ENCODE measurements at regions of chr20 and their contacts with region 1.

Region 1: GRCh38 chr20:17845701-17846475 is 122.7 kb downstream of the SNX5 start:
- DNase-seq: no peak
- H3K4me3 ChIP-seq: no peak overlapping the region
- H3K27ac ChIP-seq: no peak overlapping the region
- H3K4me1 ChIP-seq: peaks cover 62% of the 10 kb centered on the region
- CTCF ChIP-seq: no peak

Region 2: DNA sequence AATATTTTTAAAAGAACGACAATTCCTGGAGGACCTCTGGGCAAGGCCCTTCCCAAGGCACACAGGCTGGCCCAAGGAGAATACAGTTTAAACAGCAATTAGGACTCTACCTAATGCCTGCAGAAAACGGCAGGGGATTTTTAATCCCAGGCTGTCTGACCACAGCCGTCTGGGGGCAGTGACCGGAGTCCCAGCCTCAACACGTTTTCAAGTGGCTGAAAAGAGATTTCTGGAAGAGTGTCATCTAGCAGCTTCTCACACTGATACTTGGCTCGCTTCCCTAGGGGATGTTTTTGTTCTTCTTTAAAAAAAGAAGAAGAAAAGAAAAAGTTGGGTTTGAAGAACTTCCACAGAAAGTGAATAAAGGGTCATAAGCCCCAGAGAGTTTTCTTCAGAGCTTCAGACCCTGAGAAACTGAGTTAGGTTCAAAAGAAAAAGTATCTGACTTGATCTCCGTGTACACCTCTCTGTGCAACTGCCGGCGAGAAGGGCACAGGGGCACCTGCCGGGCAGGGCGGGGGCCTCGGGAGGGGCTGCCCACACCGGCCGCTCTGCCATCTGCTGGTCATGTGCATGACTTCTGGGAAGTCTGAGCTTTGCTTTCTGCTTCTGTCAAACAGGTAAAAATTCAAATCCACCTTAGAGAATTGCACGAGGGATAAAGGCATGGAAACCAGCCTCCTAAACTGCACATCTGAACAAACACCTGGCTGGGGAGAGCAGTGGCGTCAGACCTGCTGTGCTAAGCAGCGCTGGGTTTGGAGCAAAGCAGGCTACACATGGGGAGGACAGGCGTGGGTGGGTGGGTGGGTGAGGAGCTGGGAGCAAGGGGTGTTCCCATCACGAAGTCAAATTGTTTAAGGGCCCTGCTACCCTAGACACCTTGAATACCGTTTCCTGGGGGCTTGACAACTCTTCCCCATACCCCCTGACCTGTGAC is 196.8 kb before region 1 on chr20:
- CTCF ChIA-PET with region 1: no interaction called
- POLR2A ChIA-PET with region 1: no interaction called
- intact Hi-C with region 1: loop called (anchors 1 kb)
- DNase-seq: peak; percentile 67
- H3K4me3 ChIP-seq: peak overlapping the region; percentile 12
- H3K27ac ChIP-seq: peak overlapping the region; percentile 76
- H3K4me1 ChIP-seq: peaks cover 65% of the 10 kb centered on the region
- CTCF ChIP-seq: peak; percentile 79

Region 3: GRCh38 chr20:17759241-17759848 is 86.5 kb before region 1 on chr20:
- CTCF ChIA-PET with region 1: no interaction called
- POLR2A ChIA-PET with region 1: no interaction called
- intact Hi-C with region 1: no loop called
- DNase-seq: no peak
- H3K4me3 ChIP-seq: no peak overlapping the region
- H3K27ac ChIP-seq: no peak overlapping the region
- H3K4me1 ChIP-seq: no peaks in the 10 kb centered on the region
- CTCF ChIP-seq: no peak

Region 4: GRCh38 chr20:17856024-17856564 is 10.2 kb after region 1 on chr20:
- CTCF ChIA-PET with region 1: interaction called, 3 read pairs
- POLR2A ChIA-PET with region 1: interaction called, 21 read pairs
- intact Hi-C with region 1: loop called (anchors 1 kb)
- DNase-seq: peak; percentile 93
- H3K4me3 ChIP-seq: no peak overlapping the region
- H3K27ac ChIP-seq: peak overlapping the region; percentile 66
- H3K4me1 ChIP-seq: peaks cover 56% of the 10 kb centered on the region
- CTCF ChIP-seq: no peak

Region 5: GRCh38 chr20:17867131-17867925 is 21.4 kb after region 1 on chr20:
- CTCF ChIA-PET with region 1: no interaction called
- POLR2A ChIA-PET with region 1: no interaction called
- intact Hi-C with region 1: no loop called
- DNase-seq: no peak
- H3K4me3 ChIP-seq: no peak overlapping the region
- H3K27ac ChIP-seq: no peak overlapping the region
- H3K4me1 ChIP-seq: peaks cover 9% of the 10 kb centered on the region
- CTCF ChIP-seq: no peak

Region 6: DNA sequence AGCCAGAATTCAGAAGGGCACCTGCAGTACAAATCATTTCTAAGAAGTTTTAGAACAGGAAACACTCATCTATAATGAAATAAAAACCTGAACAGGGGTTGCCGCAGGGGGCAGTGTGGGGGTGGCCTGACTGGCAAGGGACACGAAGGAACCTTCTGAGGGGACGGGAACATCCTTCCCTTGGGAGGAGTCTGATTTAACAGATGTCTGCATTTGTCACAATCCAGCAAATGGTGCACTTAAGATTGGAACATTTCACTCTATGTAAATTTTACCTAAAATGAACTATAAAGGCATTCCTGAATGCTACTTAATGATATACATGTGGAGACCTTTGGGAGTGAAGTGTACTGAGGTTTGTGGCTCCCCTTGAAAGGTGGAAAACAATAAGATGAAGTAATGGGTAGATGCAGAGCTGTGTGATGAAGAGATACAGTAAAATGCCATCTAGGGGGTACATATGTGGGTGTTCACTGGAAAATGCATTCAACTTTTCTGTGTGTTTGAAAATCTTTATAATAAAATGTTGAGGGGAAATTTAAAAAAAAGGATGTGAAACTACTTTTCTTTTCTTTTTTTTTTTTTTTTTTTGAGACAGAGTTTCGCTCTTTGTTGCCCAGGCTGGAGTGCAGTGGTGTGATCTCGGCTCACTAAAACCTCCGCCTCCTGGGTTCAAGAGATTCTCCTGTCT is 33.2 kb after region 1 on chr20:
- CTCF ChIA-PET with region 1: no interaction called
- POLR2A ChIA-PET with region 1: interaction called, 3 read pairs
- intact Hi-C with region 1: loop called (anchors 1 kb)
- DNase-seq: peak; percentile 59
- H3K4me3 ChIP-seq: peak overlapping the region; percentile 29
- H3K27ac ChIP-seq: peak overlapping the region; percentile 68
- H3K4me1 ChIP-seq: peaks cover 32% of the 10 kb centered on the region
- CTCF ChIP-seq: peak; percentile 77

Region 7: GRCh38 chr20:17904027-17904426 is 58.1 kb after region 1 on chr20:
- CTCF ChIA-PET with region 1: no interaction called
- POLR2A ChIA-PET with region 1: no interaction called
- intact Hi-C with region 1: no loop called
- DNase-seq: peak; percentile 34
- H3K4me3 ChIP-seq: no peak overlapping the region
- H3K27ac ChIP-seq: no peak overlapping the region
- H3K4me1 ChIP-seq: peaks cover 33% of the 10 kb centered on the region
- CTCF ChIP-seq: no peak

Region 8: DNA sequence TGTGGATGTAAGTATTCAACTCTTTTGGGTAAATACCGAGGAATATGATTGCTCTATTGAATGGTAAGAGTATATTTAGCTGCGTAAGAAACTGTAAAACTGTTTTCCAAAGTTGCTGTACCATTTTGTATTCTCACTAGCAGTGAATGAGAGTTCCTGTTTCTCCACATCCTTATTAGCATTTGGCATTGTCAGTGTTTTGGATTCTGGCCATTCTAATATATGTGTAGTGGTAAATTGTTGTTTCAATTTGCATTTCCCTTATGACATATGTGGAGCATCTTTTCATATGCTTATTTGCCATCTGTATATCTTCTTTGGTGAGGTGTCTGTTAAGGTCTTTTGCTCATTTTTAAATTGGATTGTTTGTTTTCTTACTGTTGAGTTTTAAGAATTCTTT is 262.4 kb after region 1 on chr20:
- CTCF ChIA-PET with region 1: no interaction called
- POLR2A ChIA-PET with region 1: no interaction called
- intact Hi-C with region 1: no loop called
- DNase-seq: no peak
- H3K4me3 ChIP-seq: no peak overlapping the region
- H3K27ac ChIP-seq: no peak overlapping the region
- H3K4me1 ChIP-seq: no peaks in the 10 kb centered on the region
- CTCF ChIP-seq: no peak